ENCODE measurements at regions of chr5 and their contacts with region 1.

Region 1: DNA sequence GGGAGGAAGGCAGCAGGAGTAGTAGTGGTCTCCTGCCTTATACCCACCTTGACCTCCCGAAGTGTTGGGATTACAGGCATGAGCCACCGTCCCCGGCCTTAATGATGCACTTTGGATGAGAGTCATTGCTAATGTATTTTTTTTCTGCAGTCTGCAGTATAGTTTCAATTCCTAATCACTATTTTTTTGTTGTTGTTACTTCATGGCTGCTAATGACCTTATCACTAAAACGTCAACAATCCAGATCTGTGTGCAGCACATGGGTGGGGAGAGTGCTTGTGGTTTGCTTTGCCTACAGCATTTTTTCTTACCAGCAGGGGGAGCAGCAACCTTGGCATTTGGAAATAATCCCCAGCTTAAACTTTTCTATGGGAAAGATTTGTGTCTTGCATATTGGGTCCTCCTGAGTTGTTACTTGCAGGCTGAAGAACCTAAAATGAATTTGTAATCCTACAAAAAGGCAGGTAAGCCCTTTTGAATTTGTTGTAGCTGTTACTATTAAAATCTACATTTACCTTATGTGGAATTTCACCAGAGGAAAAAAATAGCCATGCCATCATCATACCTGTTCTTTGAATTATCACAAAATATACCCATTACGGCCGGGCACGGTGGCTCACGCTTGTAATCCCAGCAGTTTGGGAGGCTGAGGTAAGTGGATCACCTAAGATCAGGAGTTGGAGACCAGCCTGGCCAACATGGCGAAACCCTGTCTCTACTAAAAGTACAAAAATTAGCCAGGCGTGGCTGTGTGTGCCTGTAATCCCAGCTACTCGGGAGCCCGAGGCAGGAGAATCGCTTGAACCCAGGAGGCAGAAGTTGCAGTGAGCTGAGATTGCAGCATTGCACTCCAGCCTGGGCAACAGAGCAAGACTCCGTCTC is 6.3 kb upstream of the MED7 start:
- DNase-seq: peak; percentile 85
- H3K4me3 Mint-ChIP-seq: no peak overlapping the region
- H3K27ac Mint-ChIP-seq: peak overlapping the region; percentile 33
- H3K4me1 Mint-ChIP-seq: peaks cover 36% of the 10 kb centered on the region
- H3K27me3 Mint-ChIP-seq: no peaks in the 10 kb centered on the region

Region 2: DNA sequence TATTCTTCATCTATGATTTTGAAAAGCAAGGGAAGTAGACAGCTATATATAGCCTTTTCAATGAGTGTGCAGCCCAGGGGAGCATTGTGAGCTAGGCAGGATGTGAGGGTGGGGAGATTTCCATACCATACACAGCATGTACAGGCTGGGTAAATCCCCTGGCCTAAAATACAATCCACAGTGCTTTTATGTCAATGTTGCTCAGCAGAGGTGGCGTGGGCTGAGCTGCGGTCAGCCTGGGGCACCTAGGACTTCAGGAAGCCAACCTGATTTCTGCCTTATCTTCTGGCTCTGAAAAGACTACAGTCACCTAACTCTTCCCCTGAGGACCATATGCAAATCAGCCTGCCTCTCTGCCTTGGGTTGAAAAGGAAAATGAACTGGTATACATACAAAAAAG is 23.4 kb after region 1 on chr5:
- CTCF ChIA-PET with region 1: interaction called, 13 read pairs
- POLR2A ChIA-PET with region 1: interaction called, 24 read pairs
- DNase-seq: peak; percentile 85
- H3K4me3 Mint-ChIP-seq: peak overlapping the region; percentile 46
- H3K27ac Mint-ChIP-seq: peak overlapping the region; percentile 85
- H3K4me1 Mint-ChIP-seq: peaks cover 76% of the 10 kb centered on the region
- H3K27me3 Mint-ChIP-seq: no peaks in the 10 kb centered on the region

Region 3: DNA sequence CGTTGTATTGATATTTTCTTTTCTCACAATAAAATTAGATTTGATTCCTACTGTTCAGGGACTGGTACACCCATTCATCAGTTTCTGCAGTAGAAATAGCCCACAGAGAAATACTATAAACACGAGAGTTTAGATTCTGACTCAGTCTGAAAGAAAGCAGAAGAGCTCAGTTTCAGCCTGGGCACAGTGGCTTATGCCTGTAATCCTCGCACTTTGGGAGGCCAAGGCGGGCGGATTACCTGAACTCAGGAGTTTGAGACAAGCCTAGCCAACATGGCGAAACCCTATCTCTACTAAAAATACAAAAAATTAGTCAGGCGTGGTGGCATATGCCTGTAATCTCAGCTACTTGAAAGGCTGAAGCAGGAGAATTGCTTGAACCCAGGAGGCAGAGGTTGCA is 40.2 kb after region 1 on chr5:
- CTCF ChIA-PET with region 1: interaction called, 27 read pairs
- POLR2A ChIA-PET with region 1: interaction called, 106 read pairs
- DNase-seq: no peak
- H3K4me3 Mint-ChIP-seq: peak overlapping the region; percentile 70
- H3K27ac Mint-ChIP-seq: peak overlapping the region; percentile 85
- H3K4me1 Mint-ChIP-seq: peaks cover 83% of the 10 kb centered on the region
- H3K27me3 Mint-ChIP-seq: no peaks in the 10 kb centered on the region

Region 4: GRCh38 chr5:157225469-157226422 is 76.8 kb after region 1 on chr5:
- CTCF ChIA-PET with region 1: interaction called, 27 read pairs
- POLR2A ChIA-PET with region 1: interaction called, 14 read pairs
- DNase-seq: no peak
- H3K4me3 Mint-ChIP-seq: peak overlapping the region; percentile 26
- H3K27ac Mint-ChIP-seq: peak overlapping the region; percentile 69
- H3K4me1 Mint-ChIP-seq: peaks cover 72% of the 10 kb centered on the region
- H3K27me3 Mint-ChIP-seq: no peaks in the 10 kb centered on the region

Region 5: DNA sequence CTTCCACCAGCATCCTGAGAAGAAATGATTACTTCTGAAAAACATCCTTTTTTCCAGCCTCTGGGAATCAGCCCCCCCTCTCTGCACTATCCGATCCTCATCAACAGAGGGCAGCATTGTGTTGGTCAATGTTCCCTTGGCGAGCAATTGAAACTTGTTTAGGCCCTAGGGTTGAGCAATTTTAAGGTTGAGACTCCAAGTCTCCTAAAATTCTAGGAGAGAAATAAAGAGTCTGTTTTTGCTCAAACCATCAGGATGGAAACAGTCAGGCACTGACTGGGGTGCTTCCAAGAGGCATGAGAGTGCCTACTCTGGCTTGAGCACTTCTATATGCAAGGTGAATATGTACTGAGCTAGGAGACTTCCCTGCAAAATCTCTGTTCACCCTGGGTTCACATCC is 104.6 kb after region 1 on chr5:
- CTCF ChIA-PET with region 1: interaction called, 26 read pairs
- POLR2A ChIA-PET with region 1: interaction called, 10 read pairs
- DNase-seq: no peak
- H3K4me3 Mint-ChIP-seq: peak overlapping the region; percentile 19
- H3K27ac Mint-ChIP-seq: peak overlapping the region; percentile 96
- H3K4me1 Mint-ChIP-seq: peaks cover 92% of the 10 kb centered on the region
- H3K27me3 Mint-ChIP-seq: no peaks in the 10 kb centered on the region

Region 6: DNA sequence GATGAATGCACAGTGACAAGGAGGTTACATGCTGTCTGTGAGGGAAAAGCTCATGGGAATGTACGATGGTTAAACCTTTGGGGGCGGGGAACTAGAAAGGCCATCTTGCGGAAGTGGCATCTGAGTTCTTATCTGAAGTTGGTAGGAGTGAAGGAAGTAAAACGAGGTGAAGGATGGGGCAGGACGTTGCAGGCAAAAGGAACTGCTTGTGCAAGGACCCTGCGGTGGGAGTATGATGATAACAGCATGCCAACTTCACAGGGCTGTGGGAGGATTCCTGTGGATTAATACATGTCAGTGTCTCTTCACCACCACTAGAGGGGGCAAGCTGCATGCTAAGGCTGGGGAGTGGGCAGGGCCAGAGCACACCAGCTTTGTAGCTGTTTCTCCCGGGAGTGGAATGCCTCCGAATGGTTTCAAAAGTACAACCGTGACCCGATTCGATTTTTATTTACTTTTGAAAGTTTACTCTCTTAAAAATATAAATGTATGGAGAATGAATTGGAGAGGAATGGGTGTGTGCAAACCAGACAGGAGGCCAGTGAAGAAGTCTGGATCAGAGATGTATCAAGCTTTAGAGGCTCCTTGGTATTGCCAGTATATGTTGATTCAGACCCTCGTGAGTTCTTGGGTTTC is 179.4 kb after region 1 on chr5:
- CTCF ChIA-PET with region 1: interaction called, 11 read pairs
- POLR2A ChIA-PET with region 1: interaction called, 8 read pairs
- DNase-seq: peak; percentile 58
- H3K4me3 Mint-ChIP-seq: no peak overlapping the region
- H3K27ac Mint-ChIP-seq: peak overlapping the region; percentile 77
- H3K4me1 Mint-ChIP-seq: peaks cover 22% of the 10 kb centered on the region
- H3K27me3 Mint-ChIP-seq: no peaks in the 10 kb centered on the region

Region 7: DNA sequence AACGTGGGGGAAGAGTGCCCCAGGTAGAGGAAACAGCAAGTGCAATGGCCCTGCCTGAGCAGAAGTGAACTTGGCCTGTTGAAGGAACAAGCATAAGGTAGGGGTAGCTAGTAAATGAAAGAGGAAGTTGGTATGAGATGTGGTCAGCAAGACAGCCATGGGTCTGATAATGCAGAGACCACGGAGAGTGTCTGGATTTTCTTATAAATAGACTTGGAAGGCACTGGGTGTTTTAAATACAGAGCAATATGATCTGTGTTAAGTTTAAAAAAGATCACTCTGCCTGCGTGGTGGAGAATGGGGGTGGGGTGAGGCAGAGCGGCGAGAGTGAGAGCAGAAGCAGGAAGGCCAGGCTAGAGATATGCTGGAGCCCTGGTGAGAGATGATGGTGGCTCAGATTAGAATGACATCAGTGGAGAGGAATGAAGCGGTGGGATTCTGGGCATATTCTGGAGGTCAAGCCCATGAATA is 422.4 kb after region 1 on chr5:
- CTCF ChIA-PET with region 1: no interaction called
- POLR2A ChIA-PET with region 1: no interaction called
- DNase-seq: peak; percentile 66
- H3K4me3 Mint-ChIP-seq: peak overlapping the region; percentile 92
- H3K27ac Mint-ChIP-seq: peak overlapping the region; percentile 88
- H3K4me1 Mint-ChIP-seq: peaks cover 64% of the 10 kb centered on the region
- H3K27me3 Mint-ChIP-seq: no peaks in the 10 kb centered on the region